Activated CD4-positive, alpha-beta T cell treated with anti-CD3 and anti-CD28 coated beads for 36 hours (primary cell): ENCODE measurements at regions of chr7 and their contacts with region 1.

Region 1: GRCh38 chr7:93258661-93259060 is 26.5 kb downstream of the VPS50 start:
- DNase-seq: no peak
- ATAC-seq: no peak
- H3K4me3 Mint-ChIP-seq: no peak overlapping the region
- H3K27ac Mint-ChIP-seq: no peak overlapping the region
- H3K4me1 Mint-ChIP-seq: no peaks in the 10 kb centered on the region
- H3K27me3 Mint-ChIP-seq: no peaks in the 10 kb centered on the region

Region 2: GRCh38 chr7:93307131-93307660 is 48.5 kb after region 1 on chr7:
- CTCF ChIA-PET with region 1: no interaction called
- POLR2A ChIA-PET with region 1: no interaction called
- intact Hi-C with region 1: loop called in 1 of 2 experiments (anchors 1 kb)
- DNase-seq: no peak
- ATAC-seq: no peak
- H3K4me3 Mint-ChIP-seq: no peak overlapping the region
- H3K27ac Mint-ChIP-seq: no peak overlapping the region
- H3K4me1 Mint-ChIP-seq: no peaks in the 10 kb centered on the region
- H3K27me3 Mint-ChIP-seq: no peaks in the 10 kb centered on the region